Stomach (tissue), 19 donors: ENCODE measurements at regions of chr19 and their contacts with region 1.

Region 1: GRCh38 chr19:1555487-1556389 is 12.4 kb downstream of the MEX3D start:
- DNase-seq: no peak
- H3K4me3 ChIP-seq: no peak overlapping the region
- H3K27ac ChIP-seq: no peak overlapping the region
- H3K4me1 ChIP-seq: no peaks in the 10 kb centered on the region
- H3K27me3 ChIP-seq: no peaks in the 10 kb centered on the region
- CTCF ChIP-seq: no peak
- EP300 ChIP-seq: no peak
- POLR2A ChIP-seq: no peak

Region 2: GRCh38 chr19:1507763-1508509 is 47.8 kb before region 1 on chr19:
- intact Hi-C with region 1: no loop called
- DNase-seq: peak; percentile 89 to 98
- H3K4me3 ChIP-seq: peak overlapping the region; percentile 35 to 46 (median 41)
- H3K27ac ChIP-seq: peak overlapping the region; percentile 39 to 85 (median 69)
- H3K4me1 ChIP-seq: peaks cover 10 to 41% (median 38%) of the 10 kb centered on the region in 4 donors
- H3K27me3 ChIP-seq: peaks cover 19 to 93% (median 36%) of the 10 kb centered on the region in 3 donors
- CTCF ChIP-seq: no peak
- EP300 ChIP-seq: no peak
- POLR2A ChIP-seq: no peak

Region 3: GRCh38 chr19:1825909-1826556 is 270.3 kb after region 1 on chr19:
- intact Hi-C with region 1: loop called (anchors 10 kb)
- DNase-seq: peak; percentile 81 to 92
- H3K4me3 ChIP-seq: no peak overlapping the region
- H3K27ac ChIP-seq: no peak overlapping the region
- H3K4me1 ChIP-seq: peaks cover 9 to 36% (median 23%) of the 10 kb centered on the region in 4 donors
- H3K27me3 ChIP-seq: no peaks in the 10 kb centered on the region
- CTCF ChIP-seq: peak in 5 of 7 experiments; percentile 86 to 96 (median 92)
- EP300 ChIP-seq: no peak
- POLR2A ChIP-seq: no peak

Region 4: GRCh38 chr19:1863726-1864480 is 308.2 kb after region 1 on chr19:
- intact Hi-C with region 1: no loop called
- DNase-seq: peak; percentile 91 to 97
- H3K4me3 ChIP-seq: peak overlapping the region; percentile 66 to 89 (median 84)
- H3K27ac ChIP-seq: peak overlapping the region; percentile 91 to 94 (median 93)
- H3K4me1 ChIP-seq: peaks cover 36 to 52% (median 48%) of the 10 kb centered on the region in 4 donors
- H3K27me3 ChIP-seq: peaks cover 0 to 9% (median 0%) of the 10 kb centered on the region in 3 donors
- CTCF ChIP-seq: no peak
- EP300 ChIP-seq: no peak
- POLR2A ChIP-seq: no peak